Heart right ventricle (tissue), 16 donors: ENCODE measurements at regions of chr1 and their contacts with region 1.

Region 1: GRCh38 chr1:210301615-210302000 is 27.1 kb upstream of the HHAT start:
- DNase-seq: no peak
- ATAC-seq: peak in 4 of 8 donors; percentile 13 to 62 (median 38)
- H3K4me3 ChIP-seq: no peak overlapping the region
- H3K27ac ChIP-seq: peak overlapping the region in 2 of 10 donors; percentile 5 to 36
- H3K4me1 ChIP-seq: peaks cover 0 to 40% (median 9%) of the 10 kb centered on the region in 9 donors
- H3K27me3 ChIP-seq: no peaks in the 10 kb centered on the region
- CTCF ChIP-seq: no peak

Region 2: GRCh38 chr1:210143465-210144062 is 158.0 kb before region 1 on chr1:
- intact Hi-C with region 1: loop called in 2 of 10 experiments (anchors 2 to 5 kb)
- DNase-seq: peak; percentile 70 to 77
- ATAC-seq: peak in 2 of 8 donors; percentile 38
- H3K4me3 ChIP-seq: no peak overlapping the region
- H3K27ac ChIP-seq: no peak overlapping the region
- H3K4me1 ChIP-seq: no peaks in the 10 kb centered on the region
- H3K27me3 ChIP-seq: peaks cover 0 to 16% (median 0%) of the 10 kb centered on the region in 7 donors
- CTCF ChIP-seq: peak; percentile 45 to 82 (median 72)

Region 3: DNA sequence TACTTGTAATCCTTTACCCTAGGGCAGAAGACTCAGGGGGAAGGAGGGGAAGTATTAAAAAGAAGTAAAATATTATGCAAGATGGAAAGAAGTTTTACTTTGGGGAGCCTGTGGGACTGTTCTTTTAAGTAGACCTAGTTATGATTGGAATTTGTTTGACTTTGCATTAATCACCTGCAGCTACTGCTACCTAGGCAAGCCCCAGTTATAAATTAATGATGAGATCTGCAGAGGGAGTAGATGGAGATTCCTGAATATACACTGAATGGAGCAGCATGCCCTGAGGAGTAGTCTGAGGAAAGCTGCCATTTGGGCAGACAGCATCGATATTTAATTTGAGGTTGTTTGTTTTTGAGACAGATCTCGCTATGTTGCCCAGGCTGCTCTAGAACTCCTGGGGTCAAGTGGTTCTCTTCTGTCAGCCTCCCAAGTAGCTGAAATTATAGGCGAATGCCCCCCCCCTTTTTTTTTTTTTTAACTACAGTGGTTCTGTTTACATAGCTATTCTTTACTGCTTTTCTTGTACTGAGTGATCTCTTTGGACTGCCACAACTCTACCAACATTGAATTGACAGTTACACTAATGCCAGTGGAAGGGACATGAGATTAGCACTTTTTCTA is 150.4 kb before region 1 on chr1:
- intact Hi-C with region 1: loop called in 1 of 10 experiments (anchors 5 kb)
- DNase-seq: no peak
- ATAC-seq: no peak
- H3K4me3 ChIP-seq: no peak overlapping the region
- H3K27ac ChIP-seq: no peak overlapping the region
- H3K4me1 ChIP-seq: no peaks in the 10 kb centered on the region
- H3K27me3 ChIP-seq: peaks cover 0 to 7% (median 0%) of the 10 kb centered on the region in 7 donors
- CTCF ChIP-seq: no peak